ENCODE measurements at regions of chr1 and their contacts with region 1.

Region 1: GRCh38 chr1:11352816-11353799 is 80.1 kb downstream of the UBIAD1 start:
- DNase-seq: peak; percentile 31
- H3K4me3 ChIP-seq: no peak overlapping the region
- H3K27ac ChIP-seq: no peak overlapping the region
- H3K4me1 ChIP-seq: peaks cover 10% of the 10 kb centered on the region
- H3K27me3 ChIP-seq: peaks cover 30% of the 10 kb centered on the region
- CTCF ChIP-seq: no peak

Region 2: DNA sequence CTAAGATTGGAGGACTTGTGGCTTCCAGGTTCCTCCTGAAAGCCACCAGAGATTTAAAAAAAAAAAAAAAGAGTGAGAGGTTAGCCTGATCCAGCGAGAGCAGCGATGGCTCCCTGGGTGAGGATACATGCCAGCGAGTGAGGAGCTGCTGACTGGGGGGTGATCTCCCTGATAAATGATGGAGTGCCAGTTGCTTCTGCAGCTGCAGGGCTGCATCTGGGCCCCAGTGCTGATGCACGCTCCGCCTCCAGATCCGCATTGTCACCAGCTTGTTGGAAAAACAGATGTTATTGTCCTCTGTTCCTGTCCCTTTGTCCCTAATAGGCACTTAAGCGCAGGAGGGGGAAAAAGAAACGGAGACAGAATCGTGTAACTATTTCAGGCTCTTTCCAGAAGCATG is 51.5 kb before region 1 on chr1:
- CTCF ChIA-PET with region 1: no interaction called
- POLR2A ChIA-PET with region 1: interaction called, 13 read pairs
- intact Hi-C with region 1: no loop called
- DNase-seq: no peak
- H3K4me3 ChIP-seq: no peak overlapping the region
- H3K27ac ChIP-seq: no peak overlapping the region
- H3K4me1 ChIP-seq: no peaks in the 10 kb centered on the region
- H3K27me3 ChIP-seq: no peaks in the 10 kb centered on the region
- CTCF ChIP-seq: no peak

Region 3: GRCh38 chr1:11492235-11492634 is 139.1 kb after region 1 on chr1:
- CTCF ChIA-PET with region 1: no interaction called
- POLR2A ChIA-PET with region 1: interaction called, 10 read pairs
- intact Hi-C with region 1: no loop called
- DNase-seq: no peak
- H3K4me3 ChIP-seq: no peak overlapping the region
- H3K27ac ChIP-seq: no peak overlapping the region
- H3K4me1 ChIP-seq: no peaks in the 10 kb centered on the region
- H3K27me3 ChIP-seq: peaks cover 49% of the 10 kb centered on the region
- CTCF ChIP-seq: no peak